Naive thymus-derived CD8-positive, alpha-beta T cell (primary cell): ENCODE measurements at regions of chr17 and their contacts with region 1.

Region 1: DNA sequence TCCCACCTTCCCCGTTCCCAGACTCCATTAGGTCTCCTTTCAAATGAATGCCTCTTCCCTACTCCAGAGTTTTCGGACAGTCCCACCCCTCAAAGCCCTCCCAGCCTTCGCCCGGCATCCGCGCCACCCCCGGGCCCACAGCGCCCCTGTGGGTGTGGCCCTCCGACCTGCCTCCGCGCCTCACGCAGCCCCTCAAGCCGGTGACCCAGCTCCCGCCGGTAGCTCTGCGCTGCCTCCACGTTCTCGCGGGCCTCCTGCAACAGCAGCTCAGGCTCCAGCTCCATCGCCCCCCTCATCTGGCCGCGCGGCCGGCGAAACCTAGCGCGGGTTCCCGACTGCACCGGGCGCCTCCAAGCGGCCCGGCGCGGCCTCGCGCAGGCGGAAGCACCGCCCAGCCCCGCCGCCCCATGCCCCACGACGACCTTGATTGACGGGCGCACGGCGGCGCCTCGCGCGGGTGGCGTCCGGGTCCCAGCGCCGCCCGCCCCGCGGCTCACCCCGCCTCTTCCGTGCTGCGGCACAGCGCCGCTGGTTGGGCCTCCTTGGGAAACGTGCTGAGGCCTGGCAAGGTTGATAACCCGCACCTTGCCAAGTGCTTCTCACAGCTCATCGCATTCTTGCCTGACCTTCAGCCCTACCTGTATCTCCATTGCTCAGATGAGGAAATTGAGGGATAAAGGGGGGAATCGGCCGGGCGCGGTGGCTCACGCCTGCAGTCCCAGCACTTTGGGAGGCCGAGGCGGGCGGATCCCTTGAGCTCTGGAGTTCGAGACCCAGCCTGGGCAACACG is at the start of gene CRLF3:
- DNase-seq: peak; percentile 86 to 94 (median 89)
- ATAC-seq: peak; percentile 89 to 95
- H3K4me3 Mint-ChIP-seq: peak within 1 kb of the TSS; percentile 86 to 100 (median 98)
- H3K27ac Mint-ChIP-seq: peak within 1 kb of the TSS; percentile 88 to 98 (median 95)
- H3K4me1 Mint-ChIP-seq: peaks cover 15 to 42% (median 31%) of the 10 kb centered on the region in 4 donors
- H3K27me3 Mint-ChIP-seq: no peaks in the 10 kb centered on the region
- polyA plus RNA-seq, gene CRLF3: 134 to 198 (median 182) TPM

Region 2: DNA sequence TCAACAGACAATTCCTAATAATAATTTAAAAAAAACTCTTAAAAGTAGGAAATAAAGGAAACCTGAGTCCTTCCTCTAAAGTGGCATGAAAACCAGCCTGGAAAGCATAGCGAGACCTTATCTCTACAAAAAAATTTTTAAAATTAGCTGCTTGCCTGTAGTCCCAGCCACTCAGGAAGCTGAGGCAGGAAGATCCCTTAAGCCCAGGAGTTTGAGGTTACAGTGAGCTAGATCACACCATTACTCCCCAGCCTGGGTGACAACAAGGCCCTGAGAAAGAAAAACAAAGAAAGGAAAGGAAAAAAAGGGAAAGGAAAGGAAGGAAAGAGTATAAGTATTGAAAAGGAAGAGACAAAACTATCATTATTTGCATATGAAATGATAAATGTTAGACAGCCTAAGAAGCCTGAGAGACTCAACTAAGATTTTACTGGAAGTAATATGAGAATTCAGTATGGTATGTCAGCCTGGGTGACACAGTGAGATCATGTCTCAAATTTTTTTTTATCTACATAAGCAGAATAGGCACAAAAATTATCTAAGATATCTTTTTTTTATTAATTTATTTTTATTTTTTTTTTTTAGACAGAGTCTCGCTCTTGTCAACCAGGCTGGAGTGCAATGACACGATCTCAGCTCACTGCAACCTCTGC is 234.3 kb before region 1 on chr17:
- POLR2A ChIA-PET with region 1: no interaction called
- DNase-seq: no peak
- ATAC-seq: no peak
- H3K4me3 Mint-ChIP-seq: no peak overlapping the region
- H3K27ac Mint-ChIP-seq: no peak overlapping the region
- H3K4me1 Mint-ChIP-seq: no peaks in the 10 kb centered on the region
- H3K27me3 Mint-ChIP-seq: peaks cover 0 to 1% (median 0%) of the 10 kb centered on the region in 5 donors

Region 3: DNA sequence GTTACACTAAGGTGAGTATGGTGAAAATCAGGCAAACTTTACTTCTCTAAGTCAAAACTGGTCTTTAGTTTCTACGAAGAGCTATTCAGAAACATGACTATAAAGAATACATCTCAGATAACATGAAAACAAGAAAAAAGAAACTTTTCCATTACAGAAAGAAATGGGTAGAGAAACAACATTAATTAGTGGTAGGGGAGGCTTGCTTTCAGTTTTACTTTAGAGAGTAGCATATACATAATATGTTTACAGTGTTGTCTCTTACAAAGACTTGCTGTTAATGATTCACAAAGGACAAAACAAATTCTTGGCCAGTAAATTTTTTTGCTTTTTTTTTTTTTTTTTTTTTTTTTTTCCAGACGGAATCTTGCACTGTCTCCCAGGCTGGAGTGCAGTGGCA is 34.3 kb before region 1 on chr17:
- POLR2A ChIA-PET with region 1: interaction called, 10 read pairs
- DNase-seq: no peak
- ATAC-seq: no peak
- H3K4me3 Mint-ChIP-seq: peak overlapping the region in 1 of 10 donors; percentile 25
- H3K27ac Mint-ChIP-seq: peak overlapping the region; percentile 5 to 76 (median 38)
- H3K4me1 Mint-ChIP-seq: peaks cover 4 to 10% (median 7%) of the 10 kb centered on the region in 4 donors
- H3K27me3 Mint-ChIP-seq: no peaks in the 10 kb centered on the region

Region 4: GRCh38 chr17:30808785-30809286 is 15.7 kb before region 1 on chr17:
- POLR2A ChIA-PET with region 1: interaction called, 413 read pairs
- DNase-seq: peak in 9 of 10 donors; percentile 36 to 85 (median 61)
- ATAC-seq: peak; percentile 91 to 94
- H3K4me3 Mint-ChIP-seq: peak overlapping the region; percentile 82 to 93 (median 90)
- H3K27ac Mint-ChIP-seq: peak overlapping the region; percentile 96 to 99 (median 98)
- H3K4me1 Mint-ChIP-seq: peaks cover 24 to 82% (median 68%) of the 10 kb centered on the region in 4 donors
- H3K27me3 Mint-ChIP-seq: no peaks in the 10 kb centered on the region